HCT116 (cell line): ENCODE measurements at regions of chr15 and their contacts with region 1.

Region 1: DNA sequence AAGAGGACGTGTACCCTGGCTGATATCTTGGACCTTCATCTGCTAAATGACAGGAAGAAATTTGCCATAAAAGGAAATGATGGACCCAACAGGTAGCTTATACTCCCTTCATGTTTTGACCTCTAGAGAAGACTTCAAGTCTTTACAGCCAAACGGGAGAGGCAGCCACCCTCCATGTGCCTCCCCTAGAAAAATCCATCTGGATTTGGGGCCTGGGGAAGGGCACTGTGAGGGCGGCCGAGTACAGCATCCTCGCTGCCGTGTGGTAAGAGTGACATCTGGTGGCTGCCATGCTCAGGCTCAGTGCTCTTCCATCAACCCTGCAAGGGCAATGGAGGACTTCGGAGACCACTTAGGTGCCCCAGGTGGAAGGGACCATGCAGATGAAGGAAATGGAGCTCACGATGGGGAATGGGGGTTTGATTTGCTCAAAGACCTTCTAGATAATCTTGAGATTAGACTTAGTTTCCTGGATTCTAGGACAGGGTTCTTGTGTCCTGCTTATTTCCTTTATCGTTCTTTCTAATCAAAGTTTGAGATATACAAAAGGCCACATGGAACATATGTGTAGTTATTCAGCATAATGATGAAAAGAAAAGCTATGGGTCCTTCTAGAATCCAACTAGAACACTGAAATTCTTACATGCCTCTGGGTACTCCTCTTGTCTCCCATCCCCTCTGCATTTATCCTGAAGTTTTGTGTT is 44.4 kb downstream of the AQP9 start:
- DNase-seq: peak; percentile 48
- ATAC-seq: peak; percentile 100
- H3K4me3 ChIP-seq: no peak overlapping the region
- H3K27ac ChIP-seq: no peak overlapping the region
- H3K4me1 ChIP-seq: no peaks in the 10 kb centered on the region
- H3K27me3 ChIP-seq: peaks cover 5% of the 10 kb centered on the region; the same call in 1 of the 2 replicates
- CTCF ChIP-seq: peak; percentile 79 to 88 (median 87)
- POLR2A ChIP-seq: no peak
- RAD21 ChIP-seq: peak; percentile 93

Region 2: GRCh38 chr15:57340682-57341259 is 841.8 kb before region 1 on chr15:
- CTCF ChIA-PET with region 1: no interaction called
- POLR2A ChIA-PET with region 1: no interaction called
- RAD21 ChIA-PET with region 1: no interaction called
- intact Hi-C with region 1: loop called (anchors 10 kb)
- DNase-seq: peak; percentile 56
- ATAC-seq: peak; percentile 91
- H3K4me3 ChIP-seq: no peak overlapping the region
- H3K27ac ChIP-seq: no peak overlapping the region
- H3K4me1 ChIP-seq: no peaks in the 10 kb centered on the region
- H3K27me3 ChIP-seq: no peaks in the 10 kb centered on the region
- CTCF ChIP-seq: peak; percentile 75 to 92 (median 90)
- POLR2A ChIP-seq: no peak
- RAD21 ChIP-seq: peak; percentile 94

Region 3: DNA sequence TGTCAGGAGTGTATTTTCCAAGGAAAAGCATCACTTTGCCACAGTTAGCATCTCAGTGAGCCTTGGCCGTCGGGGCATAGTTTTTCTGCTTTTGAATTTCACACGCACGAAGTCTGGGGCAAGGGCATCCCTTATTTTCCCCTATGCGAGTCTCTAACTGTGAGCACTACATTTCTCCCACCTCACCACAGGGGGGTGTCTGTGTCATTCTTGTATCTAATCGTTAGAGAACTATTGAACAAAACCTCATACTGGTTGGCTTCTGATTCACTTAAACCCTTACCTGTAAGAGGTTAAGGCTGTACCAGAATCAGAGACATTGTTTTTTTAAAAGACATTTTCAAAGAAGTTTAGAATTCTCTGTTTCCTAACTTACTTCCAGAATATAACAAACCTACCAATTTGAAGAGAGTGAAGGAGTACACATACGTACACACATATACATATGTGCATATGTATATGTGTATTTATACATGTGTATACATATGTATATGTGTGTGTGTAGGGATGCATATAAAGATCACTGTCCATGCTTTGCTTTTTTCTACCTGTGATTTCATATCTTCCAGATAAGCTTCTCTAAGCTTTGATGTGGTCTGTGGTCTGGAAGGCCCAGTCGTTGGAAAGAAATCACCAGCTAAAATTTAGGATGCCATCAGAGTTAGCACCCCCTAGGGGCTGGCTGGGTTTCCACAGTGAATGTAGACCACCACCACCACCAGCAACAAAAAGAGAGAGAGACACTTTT is 541.5 kb before region 1 on chr15:
- CTCF ChIA-PET with region 1: no interaction called
- POLR2A ChIA-PET with region 1: no interaction called
- RAD21 ChIA-PET with region 1: no interaction called
- intact Hi-C with region 1: loop called (anchors 1 kb)
- DNase-seq: no peak
- ATAC-seq: peak; percentile 84
- H3K4me3 ChIP-seq: no peak overlapping the region
- H3K27ac ChIP-seq: no peak overlapping the region
- H3K4me1 ChIP-seq: no peaks in the 10 kb centered on the region
- H3K27me3 ChIP-seq: no peaks in the 10 kb centered on the region
- CTCF ChIP-seq: peak; percentile 18 to 58 (median 47); a peak in 4 of 6 replicates
- POLR2A ChIP-seq: no peak
- RAD21 ChIP-seq: peak; percentile 43; the same call in 1 of the 2 replicates

Region 4: GRCh38 chr15:57751177-57751800 is 431.3 kb before region 1 on chr15:
- CTCF ChIA-PET with region 1: interaction called, 12 read pairs
- POLR2A ChIA-PET with region 1: no interaction called
- RAD21 ChIA-PET with region 1: interaction called in 1 of 2 experiments, 3 read pairs
- intact Hi-C with region 1: loop called (anchors 5 kb)
- DNase-seq: no peak
- ATAC-seq: peak; percentile 63
- H3K4me3 ChIP-seq: no peak overlapping the region
- H3K27ac ChIP-seq: no peak overlapping the region
- H3K4me1 ChIP-seq: no peaks in the 10 kb centered on the region
- H3K27me3 ChIP-seq: no peaks in the 10 kb centered on the region
- CTCF ChIP-seq: peak; percentile 51 to 62 (median 60); a peak in 5 of 6 replicates
- POLR2A ChIP-seq: no peak
- RAD21 ChIP-seq: peak; percentile 71

Region 5: GRCh38 chr15:57902155-57902554 is 280.5 kb before region 1 on chr15:
- CTCF ChIA-PET with region 1: no interaction called
- POLR2A ChIA-PET with region 1: no interaction called
- RAD21 ChIA-PET with region 1: no interaction called
- intact Hi-C with region 1: no loop called
- DNase-seq: no peak
- ATAC-seq: no peak
- H3K4me3 ChIP-seq: no peak overlapping the region
- H3K27ac ChIP-seq: no peak overlapping the region
- H3K4me1 ChIP-seq: no peaks in the 10 kb centered on the region
- H3K27me3 ChIP-seq: no peaks in the 10 kb centered on the region
- CTCF ChIP-seq: no peak
- POLR2A ChIP-seq: no peak
- RAD21 ChIP-seq: no peak

Region 6: DNA sequence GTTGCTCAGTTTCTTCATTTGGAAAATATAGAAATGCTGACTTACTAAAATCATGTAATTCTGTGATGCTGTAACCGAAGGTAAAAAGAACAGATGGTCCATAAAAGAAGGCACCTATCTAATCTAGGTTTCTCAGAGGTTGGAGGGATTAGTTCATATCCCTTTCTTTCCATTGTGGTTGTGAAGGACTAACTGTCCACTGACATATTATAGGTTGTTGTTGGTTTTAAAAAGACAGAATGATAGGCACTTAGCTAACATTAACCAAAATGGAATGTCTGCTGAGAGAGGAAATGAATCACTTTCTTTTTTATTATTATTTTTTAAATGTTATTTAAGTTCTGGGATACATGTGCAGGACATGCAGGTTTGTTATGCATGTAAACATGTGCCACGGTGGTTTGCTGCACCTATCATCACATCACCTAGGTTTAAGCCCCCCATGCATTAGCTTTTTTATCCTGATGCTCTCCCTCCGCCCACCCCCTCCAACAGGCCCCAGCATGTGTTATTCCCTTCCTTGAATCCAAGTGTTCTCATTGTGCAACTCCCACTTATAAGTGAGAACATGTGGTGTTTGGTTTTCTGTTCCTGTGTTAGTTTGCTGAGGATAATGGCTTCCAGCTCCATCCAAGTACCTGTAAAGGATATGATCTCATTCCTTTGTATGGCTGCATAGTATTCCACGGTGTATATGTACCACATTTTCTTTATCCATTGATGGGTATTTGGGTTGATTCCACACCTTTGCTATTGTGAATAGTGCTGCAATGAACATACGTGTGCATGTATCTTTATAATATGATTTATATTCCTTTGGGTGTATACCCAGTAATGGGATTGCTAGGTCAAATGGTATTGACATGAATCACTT is 162.9 kb before region 1 on chr15:
- CTCF ChIA-PET with region 1: no interaction called
- POLR2A ChIA-PET with region 1: no interaction called
- RAD21 ChIA-PET with region 1: no interaction called
- intact Hi-C with region 1: no loop called
- DNase-seq: no peak
- ATAC-seq: no peak
- H3K4me3 ChIP-seq: no peak overlapping the region
- H3K27ac ChIP-seq: no peak overlapping the region
- H3K4me1 ChIP-seq: no peaks in the 10 kb centered on the region
- H3K27me3 ChIP-seq: no peaks in the 10 kb centered on the region
- CTCF ChIP-seq: no peak
- POLR2A ChIP-seq: no peak
- RAD21 ChIP-seq: no peak

Region 7: DNA sequence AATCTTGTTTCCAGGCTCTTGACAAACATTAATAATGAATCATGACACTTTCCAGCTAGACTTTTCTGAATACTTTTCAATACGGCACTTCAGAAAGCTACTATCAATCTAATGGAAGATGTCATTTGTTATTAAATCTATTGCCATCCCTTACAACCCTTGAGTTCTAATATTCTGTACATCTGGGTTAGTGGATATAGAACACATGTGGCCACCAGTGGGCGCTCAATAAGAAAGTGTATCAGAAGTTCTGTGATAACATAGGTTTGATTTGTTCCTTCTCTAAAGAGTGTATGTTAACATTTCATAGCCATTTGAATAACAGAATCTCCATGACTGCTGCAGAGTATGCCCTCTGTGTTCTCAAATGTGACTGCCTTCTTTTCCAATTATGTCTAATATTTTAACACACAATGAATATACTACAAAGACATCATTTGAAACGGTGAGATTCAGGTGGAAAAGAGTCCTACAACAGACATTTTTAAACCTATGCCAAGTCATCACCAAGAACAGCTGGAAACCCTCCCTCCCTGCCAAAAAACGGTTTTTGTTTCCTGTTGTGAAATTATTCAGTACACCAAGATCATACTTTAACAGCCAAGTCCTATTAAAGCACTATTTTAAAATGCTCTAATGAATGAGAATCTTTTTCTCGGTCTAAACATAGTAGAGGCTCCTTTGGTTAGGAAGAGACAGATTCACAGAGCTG is 139.3 kb before region 1 on chr15:
- CTCF ChIA-PET with region 1: no interaction called
- POLR2A ChIA-PET with region 1: no interaction called
- RAD21 ChIA-PET with region 1: no interaction called
- intact Hi-C with region 1: loop called (anchors 1 kb)
- DNase-seq: peak; percentile 29
- ATAC-seq: peak; percentile 84
- H3K4me3 ChIP-seq: no peak overlapping the region
- H3K27ac ChIP-seq: no peak overlapping the region
- H3K4me1 ChIP-seq: no peaks in the 10 kb centered on the region
- H3K27me3 ChIP-seq: no peaks in the 10 kb centered on the region
- CTCF ChIP-seq: peak; percentile 34 to 89 (median 76); a peak in 5 of 6 replicates
- POLR2A ChIP-seq: no peak
- RAD21 ChIP-seq: peak; percentile 37

Region 8: DNA sequence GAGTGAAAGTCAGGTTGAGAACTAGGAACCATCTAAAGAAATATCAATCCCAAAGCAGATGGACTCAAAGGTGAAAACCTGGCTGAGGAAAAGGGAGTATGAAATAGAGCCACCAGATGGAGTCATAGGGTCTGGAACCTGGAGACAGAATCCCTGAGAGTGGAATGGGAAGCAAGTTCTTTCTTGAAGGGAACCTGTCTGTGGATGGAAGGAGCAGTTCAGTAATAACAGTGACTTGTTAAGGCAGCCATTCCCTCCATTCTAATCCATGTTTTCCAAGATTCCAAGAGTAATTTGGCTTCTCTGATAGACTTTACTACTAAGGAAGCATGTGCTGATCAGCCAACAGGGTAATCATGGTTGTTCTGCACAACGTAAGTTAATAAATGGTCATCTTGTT is 66.9 kb before region 1 on chr15:
- CTCF ChIA-PET with region 1: no interaction called
- POLR2A ChIA-PET with region 1: no interaction called
- RAD21 ChIA-PET with region 1: no interaction called
- intact Hi-C with region 1: loop called (anchors 1 kb)
- DNase-seq: peak; percentile 2
- ATAC-seq: 0 out of 2 replicates have a peak, but pooled peaks have one; percentile 42
- H3K4me3 ChIP-seq: no peak overlapping the region
- H3K27ac ChIP-seq: no peak overlapping the region
- H3K4me1 ChIP-seq: no peaks in the 10 kb centered on the region
- H3K27me3 ChIP-seq: no peaks in the 10 kb centered on the region
- CTCF ChIP-seq: peak; percentile 13 to 28 (median 20); a peak in 3 of 6 replicates
- POLR2A ChIP-seq: no peak
- RAD21 ChIP-seq: peak; percentile 47; the same call in 1 of the 2 replicates